Posterior cingulate gyrus (tissue), 11 donors: ENCODE measurements at regions of chr11 and their contacts with region 1.

Region 1: DNA sequence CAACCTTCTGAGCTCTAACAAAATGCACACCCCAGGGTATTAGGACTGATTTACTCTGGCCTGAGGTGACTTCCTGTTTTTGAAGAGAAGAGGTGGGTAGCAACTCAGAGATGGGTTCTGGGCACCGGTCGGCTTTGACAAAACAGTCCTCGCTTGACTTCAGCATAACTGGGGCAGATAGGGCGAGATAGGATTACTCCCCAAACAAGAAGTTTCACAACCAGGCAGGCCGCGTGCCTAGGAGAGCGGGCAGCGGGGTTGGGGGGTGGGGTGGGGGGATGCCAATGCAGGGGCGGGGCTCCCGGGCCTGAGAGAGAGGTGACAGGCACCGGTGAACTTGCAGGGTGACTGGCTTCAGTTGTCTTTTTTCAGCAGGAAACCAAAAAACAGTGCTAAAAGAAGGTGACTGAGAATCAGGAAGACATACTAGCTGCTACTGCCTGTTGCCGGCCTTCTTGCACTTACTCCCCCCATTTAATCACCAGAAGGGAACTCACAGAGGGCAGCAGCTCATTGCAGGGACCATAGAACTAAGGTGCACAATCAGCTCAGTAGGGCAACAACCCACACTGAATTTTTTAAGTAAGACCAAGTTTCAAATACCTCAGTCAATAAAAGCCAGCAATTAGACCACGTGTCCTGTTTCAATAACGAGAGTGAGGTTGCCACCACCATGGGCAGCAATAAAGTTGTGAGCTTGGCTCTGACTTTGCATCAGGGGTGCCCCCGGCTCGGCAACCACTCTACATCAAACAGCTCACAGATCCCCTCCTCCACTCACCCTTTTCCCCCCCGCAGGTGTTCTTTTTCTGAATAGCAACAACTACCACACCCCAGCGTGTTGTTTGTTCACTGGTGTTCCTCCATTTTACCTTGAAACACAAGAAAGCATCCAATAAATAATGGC is 37.2 kb upstream of the ETS1 start:
- DNase-seq: no peak

Region 2: DNA sequence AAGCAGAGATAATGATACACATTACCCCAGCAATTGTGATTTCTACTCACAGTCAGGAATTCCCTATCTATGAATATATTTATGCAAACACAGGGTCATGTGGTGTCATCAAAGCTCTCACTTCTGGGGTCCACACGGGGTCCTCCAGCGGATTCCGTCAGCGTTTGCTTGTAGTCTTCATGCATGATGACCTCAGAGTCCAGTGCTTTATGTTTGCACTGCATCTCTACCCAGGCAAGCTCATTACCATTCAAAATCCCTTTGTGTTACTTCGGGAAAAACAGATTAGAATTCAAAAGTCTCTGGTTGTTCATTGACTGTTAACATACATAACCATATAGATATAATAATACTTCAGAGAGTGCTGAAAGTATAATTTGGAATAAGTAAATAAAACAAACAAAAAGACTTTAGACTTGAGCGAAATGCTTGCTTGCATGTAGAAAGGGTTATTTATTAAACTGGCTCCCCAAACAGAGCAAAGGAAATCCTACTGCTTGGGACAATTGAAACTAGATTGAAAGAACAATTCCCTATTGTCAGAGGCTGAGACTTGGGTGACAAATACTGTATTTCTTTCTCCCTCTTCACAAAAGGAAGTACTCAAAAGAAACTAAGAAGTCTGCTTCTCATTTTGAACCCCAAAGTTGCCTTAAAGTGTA is 460.3 kb before region 1 on chr11:
- intact Hi-C with region 1: loop called (anchors 5 kb)
- DNase-seq: no peak

Region 3: DNA sequence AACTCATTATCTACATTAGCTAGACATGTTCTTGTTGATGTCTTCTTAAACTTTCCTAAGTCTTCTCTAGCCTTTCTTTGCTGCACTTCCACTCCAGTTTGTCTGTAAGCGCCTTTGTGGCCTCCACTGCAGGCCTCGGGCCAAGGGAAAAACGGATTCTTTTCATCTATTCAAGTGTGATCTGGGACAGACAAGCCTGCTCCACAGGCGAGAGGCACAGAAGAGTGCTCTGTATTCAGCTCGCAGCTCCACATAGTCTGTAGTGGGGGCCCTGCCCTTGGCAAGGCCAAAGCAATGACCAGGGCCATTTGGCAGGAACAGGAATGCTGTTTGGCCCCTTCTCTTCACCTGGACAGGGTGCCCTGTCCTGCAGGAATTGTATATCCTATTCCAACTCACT is 667.0 kb after region 1 on chr11:
- intact Hi-C with region 1: no loop called
- DNase-seq: peak; percentile 51 to 94 (median 63)